ENCODE measurements at regions of chr20 and their contacts with region 1.

Region 1: GRCh38 chr20:62926239-62927104 is at the start of gene DIDO1:
- DNase-seq: peak; percentile 94
- ATAC-seq: peak; percentile 78
- H3K4me3 Mint-ChIP-seq: peak within 1 kb of the TSS; percentile 94
- H3K27ac Mint-ChIP-seq: peak within 1 kb of the TSS; percentile 96
- H3K4me1 Mint-ChIP-seq: peaks cover 64% of the 10 kb centered on the region
- H3K27me3 Mint-ChIP-seq: no peaks in the 10 kb centered on the region
- total RNA-seq, gene DIDO1: 43.7 to 49.7 TPM

Region 2: GRCh38 chr20:62900052-62900691 is 26.3 kb before region 1 on chr20:
- CTCF ChIA-PET with region 1: interaction called, 140 read pairs
- POLR2A ChIA-PET with region 1: no interaction called
- intact Hi-C with region 1: loop called in 1 of 2 experiments (anchors 1 kb)
- DNase-seq: peak; percentile 86
- ATAC-seq: peak; percentile 93
- H3K4me3 Mint-ChIP-seq: no peak overlapping the region
- H3K27ac Mint-ChIP-seq: peak overlapping the region; percentile 56
- H3K4me1 Mint-ChIP-seq: peaks cover 38% of the 10 kb centered on the region
- H3K27me3 Mint-ChIP-seq: no peaks in the 10 kb centered on the region

Region 3: DNA sequence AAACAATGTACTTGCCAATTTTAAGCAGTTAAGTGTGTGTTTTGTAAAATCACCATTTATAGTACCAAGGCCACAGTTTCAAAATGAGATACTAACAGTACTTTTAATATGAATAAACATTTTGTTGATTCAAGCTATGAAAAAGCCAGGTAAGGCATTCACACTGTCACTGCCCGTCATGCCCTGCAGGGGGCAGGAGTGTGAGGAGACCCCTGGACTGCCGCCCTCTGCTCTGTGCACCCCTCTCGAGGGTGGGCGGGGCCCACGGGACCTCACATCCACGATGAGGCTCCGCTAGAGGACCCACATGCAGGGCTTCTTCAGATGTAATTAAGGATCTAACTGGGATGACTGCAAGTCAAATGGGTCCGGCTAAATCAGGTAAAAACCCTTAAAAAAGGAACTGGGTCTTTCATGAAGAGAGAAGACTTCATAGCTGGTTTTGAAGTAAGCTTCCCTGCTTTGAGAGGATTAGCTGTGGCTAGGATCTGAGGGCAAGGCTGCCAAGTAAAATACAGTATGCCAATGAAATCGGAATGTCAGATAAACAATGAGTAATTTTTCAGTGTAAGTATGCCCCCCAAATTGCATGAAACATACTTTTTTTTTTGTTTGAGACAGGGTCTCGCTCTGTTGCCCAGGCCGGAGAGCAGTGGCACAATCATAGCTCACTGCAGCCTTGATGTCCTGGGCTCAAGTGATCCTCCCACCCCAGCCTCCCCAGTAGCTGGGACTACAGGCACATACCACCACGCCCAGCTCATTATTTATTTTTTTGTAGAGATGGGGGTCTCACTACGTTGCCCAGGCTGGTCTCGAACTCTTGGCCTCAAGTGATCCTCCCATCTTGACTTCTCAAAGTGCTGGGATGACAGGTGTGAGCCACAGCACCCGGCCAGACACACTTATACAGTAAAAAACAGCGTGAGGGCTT is 18.8 kb before region 1 on chr20:
- CTCF ChIA-PET with region 1: interaction called, 140 read pairs
- POLR2A ChIA-PET with region 1: interaction called, 8 read pairs
- intact Hi-C with region 1: no loop called
- DNase-seq: peak; percentile 62
- ATAC-seq: peak; percentile 76
- H3K4me3 Mint-ChIP-seq: no peak overlapping the region
- H3K27ac Mint-ChIP-seq: peak overlapping the region; percentile 58
- H3K4me1 Mint-ChIP-seq: peaks cover 11% of the 10 kb centered on the region
- H3K27me3 Mint-ChIP-seq: no peaks in the 10 kb centered on the region

Region 4: DNA sequence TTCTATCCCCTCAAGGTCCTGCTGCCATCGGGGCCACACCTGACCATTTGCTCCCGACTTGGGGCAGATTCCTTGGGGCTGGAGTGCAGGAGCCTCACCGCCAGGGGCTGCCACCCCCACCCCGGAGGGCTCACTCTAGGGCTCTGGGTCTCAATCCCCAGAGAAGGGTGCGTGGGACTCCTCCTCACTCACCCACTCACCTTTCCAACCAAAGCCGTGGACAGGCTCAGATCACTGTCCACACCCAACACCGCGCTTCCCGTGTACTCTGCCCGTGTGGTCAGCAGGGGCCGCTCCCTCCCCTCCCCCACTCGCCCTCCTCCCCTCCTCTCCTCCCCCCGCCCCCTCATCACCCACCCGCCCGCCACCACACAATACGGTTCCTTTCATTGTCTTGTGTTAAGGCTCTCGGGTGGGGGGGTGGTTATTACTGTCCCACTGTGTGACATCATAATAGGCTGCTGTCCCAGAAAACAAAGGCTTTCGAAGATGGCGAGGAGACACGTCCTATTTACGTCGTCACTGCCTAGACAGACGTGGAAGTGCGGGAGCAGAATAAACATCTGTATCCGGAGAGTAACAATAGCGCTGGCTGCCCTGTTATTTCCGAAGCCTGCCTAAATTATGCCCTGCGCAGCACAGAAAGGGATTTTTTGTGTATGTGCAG is 203.7 kb after region 1 on chr20:
- CTCF ChIA-PET with region 1: no interaction called
- POLR2A ChIA-PET with region 1: no interaction called
- intact Hi-C with region 1: no loop called
- DNase-seq: peak; percentile 1
- ATAC-seq: no peak
- H3K4me3 Mint-ChIP-seq: no peak overlapping the region
- H3K27ac Mint-ChIP-seq: no peak overlapping the region
- H3K4me1 Mint-ChIP-seq: no peaks in the 10 kb centered on the region
- H3K27me3 Mint-ChIP-seq: peaks cover 13% of the 10 kb centered on the region

Region 5: DNA sequence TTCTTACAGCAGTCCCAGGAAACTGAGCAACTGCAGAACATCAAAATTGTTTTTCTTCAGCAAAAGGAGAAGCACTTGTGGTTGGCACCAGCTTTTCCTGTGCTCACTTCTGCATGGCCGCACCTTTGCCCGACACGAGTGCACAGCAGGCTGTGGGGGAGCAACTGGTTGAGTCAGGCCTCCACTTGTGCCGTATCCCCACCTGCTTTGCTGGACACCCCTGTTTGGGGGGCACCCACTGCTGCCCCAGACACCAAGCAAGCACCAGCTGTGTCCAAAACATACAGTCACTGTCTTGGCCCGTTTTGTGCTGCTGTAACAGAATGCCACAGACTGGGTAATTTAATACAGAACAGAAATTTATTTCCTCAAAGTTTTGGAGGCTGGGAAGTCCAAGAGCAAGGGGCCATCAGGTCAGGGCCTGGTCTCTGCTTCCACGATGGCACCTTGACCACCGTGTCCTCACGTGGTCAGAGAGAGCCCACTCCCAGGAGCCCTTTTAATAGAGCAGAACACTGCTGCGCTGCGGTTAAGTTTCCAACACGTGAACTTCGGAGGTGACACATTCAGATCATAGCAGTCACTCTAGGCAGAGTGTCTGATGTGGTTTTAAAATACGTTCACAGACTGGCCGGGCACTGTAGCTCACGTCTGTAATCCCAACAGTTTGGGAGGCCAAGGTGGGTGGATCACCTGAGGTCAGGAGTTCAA is 709.1 kb after region 1 on chr20:
- CTCF ChIA-PET with region 1: no interaction called
- POLR2A ChIA-PET with region 1: no interaction called
- intact Hi-C with region 1: loop called in 1 of 2 experiments (anchors 10 kb)
- DNase-seq: peak; percentile 88
- ATAC-seq: peak; percentile 77
- H3K4me3 Mint-ChIP-seq: peak overlapping the region; percentile 35
- H3K27ac Mint-ChIP-seq: peak overlapping the region; percentile 84
- H3K4me1 Mint-ChIP-seq: peaks cover 69% of the 10 kb centered on the region
- H3K27me3 Mint-ChIP-seq: no peaks in the 10 kb centered on the region